Activated CD4-positive, alpha-beta T cell treated with anti-CD3 and anti-CD28 coated beads for 36 hours (primary cell): ENCODE measurements at regions of chr2 and their contacts with region 1.

Region 1: DNA sequence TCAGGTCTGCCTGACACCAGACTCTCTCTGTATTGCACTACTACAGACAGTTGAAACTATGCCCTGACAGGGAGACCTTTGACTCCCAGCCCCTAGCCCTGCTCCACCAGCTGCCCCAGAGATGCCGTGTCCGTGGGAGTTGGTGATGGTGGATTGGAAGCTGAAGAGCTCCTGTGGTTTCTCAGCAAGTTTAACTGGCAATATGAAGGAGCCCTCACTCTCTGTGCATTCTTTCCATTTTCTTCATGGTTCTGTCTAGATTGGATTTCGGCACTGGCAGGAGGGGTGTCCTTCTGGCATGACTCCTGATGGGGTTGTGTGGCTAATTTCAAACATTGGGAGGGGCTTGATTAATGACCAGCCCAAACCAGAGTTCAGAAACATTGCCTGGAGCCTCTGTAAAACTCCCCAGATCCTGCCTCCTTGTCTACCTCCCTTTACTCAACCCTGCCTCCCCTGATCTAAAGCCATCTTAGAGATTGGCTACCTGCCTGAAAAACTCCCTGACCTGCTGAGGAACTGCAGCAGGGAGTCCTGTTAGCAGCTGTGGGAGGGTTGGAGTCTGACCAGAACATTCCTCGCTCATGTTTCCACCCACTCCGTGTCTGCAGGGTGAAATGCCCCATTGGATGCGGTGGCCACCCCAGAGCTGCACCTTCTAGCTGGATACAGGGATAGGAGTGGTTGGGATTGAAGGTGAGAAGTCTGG is 206.9 kb upstream of the SPRED2 start:
- DNase-seq: no peak
- ATAC-seq: no peak
- H3K4me3 Mint-ChIP-seq: no peak overlapping the region
- H3K27ac Mint-ChIP-seq: no peak overlapping the region
- H3K4me1 Mint-ChIP-seq: peaks cover 3% of the 10 kb centered on the region
- H3K27me3 Mint-ChIP-seq: peaks cover 8% of the 10 kb centered on the region

Region 2: GRCh38 chr2:65576861-65577601 is 62.3 kb before region 1 on chr2:
- CTCF ChIA-PET with region 1: no interaction called
- POLR2A ChIA-PET with region 1: no interaction called
- intact Hi-C with region 1: no loop called
- DNase-seq: no peak
- ATAC-seq: peak; percentile 53
- H3K4me3 Mint-ChIP-seq: no peak overlapping the region
- H3K27ac Mint-ChIP-seq: no peak overlapping the region
- H3K4me1 Mint-ChIP-seq: peaks cover 3% of the 10 kb centered on the region
- H3K27me3 Mint-ChIP-seq: peaks cover 9% of the 10 kb centered on the region

Region 3: GRCh38 chr2:65710779-65711295 is 71.5 kb after region 1 on chr2:
- CTCF ChIA-PET with region 1: interaction called, 4 read pairs
- POLR2A ChIA-PET with region 1: no interaction called
- intact Hi-C with region 1: loop called in 1 of 2 experiments (anchors 5 kb)
- DNase-seq: no peak
- ATAC-seq: no peak
- H3K4me3 Mint-ChIP-seq: no peak overlapping the region
- H3K27ac Mint-ChIP-seq: no peak overlapping the region
- H3K4me1 Mint-ChIP-seq: no peaks in the 10 kb centered on the region
- H3K27me3 Mint-ChIP-seq: peaks cover 7% of the 10 kb centered on the region

Region 4: DNA sequence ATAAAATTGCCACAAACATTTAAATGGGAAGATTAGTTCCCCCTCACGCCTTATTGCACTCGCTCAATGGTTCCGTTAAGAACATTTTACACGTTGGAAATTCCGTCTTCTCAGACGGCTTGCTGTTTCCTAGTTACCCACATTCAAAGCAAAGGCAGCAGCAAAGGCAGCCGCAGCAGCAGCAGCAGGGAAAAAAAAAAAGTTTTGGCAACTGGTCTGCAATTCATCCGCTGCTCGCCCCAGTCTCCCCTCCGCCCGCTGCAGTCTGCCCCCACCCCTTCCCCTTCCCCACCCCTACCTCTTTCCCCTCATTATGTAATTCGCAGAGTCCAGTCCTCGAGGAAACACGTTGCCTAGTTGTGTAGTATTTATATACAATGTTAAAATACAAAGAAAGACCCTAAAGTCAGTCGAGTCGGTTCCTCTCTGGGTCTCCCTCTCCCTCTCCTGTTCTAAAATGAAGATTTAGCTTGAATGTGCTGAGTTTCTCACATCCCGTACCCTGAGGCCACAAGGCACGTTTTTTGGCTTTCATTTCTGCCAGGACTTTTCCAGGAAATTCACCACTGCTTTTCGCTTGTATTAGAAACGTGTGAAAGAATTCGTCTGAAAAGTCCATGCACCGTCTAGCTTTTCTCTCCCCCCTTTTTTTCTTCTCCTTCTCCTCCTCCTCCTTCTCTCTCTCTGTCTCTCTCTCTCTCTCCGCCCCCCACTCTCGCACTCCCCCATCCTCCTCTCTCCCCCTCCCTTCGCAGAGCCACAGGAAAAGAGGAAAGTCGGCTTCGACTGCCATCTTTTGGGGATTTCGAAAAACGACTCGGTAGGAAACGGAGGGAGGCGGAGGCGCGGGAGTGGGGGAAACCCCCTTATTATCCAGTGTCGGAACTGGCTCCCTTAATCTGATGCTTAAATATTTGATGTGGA is 935.7 kb after region 1 on chr2:
- CTCF ChIA-PET with region 1: no interaction called
- POLR2A ChIA-PET with region 1: no interaction called
- intact Hi-C with region 1: loop called in 1 of 2 experiments (anchors 5 kb)
- DNase-seq: peak; percentile 34
- ATAC-seq: no peak
- H3K4me3 Mint-ChIP-seq: no peak overlapping the region
- H3K27ac Mint-ChIP-seq: no peak overlapping the region
- H3K4me1 Mint-ChIP-seq: peaks cover 6% of the 10 kb centered on the region
- H3K27me3 Mint-ChIP-seq: peaks cover 49% of the 10 kb centered on the region